RWPE1 (cell line): ENCODE measurements at regions of chr10 and their contacts with region 1.

Region 1: GRCh38 chr10:12214763-12215218 is 18.8 kb downstream of the CDC123 start:
- DNase-seq: no peak
- H3K27ac ChIP-seq: no peak overlapping the region
- CTCF ChIP-seq: peak; percentile 79

Region 2: DNA sequence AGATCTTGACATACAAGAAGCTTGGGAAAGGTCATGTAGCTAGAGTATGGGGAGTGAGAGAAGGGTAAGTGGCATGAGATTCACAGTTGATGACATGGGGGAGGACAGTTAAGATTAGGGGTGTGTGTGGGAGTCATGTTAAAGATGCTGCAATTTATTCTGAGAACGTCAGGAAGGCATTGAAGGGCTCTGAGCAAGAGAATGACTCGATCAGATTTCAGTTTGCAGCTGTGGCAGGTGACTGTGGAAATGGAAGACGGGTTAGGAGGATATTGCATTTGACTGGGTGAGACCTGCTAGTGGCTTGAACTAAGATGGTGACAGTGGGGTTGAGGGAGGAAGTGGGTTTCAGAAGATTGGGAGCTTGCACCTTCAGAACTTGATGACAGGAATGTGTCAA is 13.2 kb before region 1 on chr10:
- CTCF ChIA-PET with region 1: interaction called, 20 read pairs
- POLR2A ChIA-PET with region 1: no interaction called
- DNase-seq: no peak
- H3K27ac ChIP-seq: no peak overlapping the region
- CTCF ChIP-seq: no peak